ENCODE measurements at regions of chr20 and their contacts with region 1.

Region 1: DNA sequence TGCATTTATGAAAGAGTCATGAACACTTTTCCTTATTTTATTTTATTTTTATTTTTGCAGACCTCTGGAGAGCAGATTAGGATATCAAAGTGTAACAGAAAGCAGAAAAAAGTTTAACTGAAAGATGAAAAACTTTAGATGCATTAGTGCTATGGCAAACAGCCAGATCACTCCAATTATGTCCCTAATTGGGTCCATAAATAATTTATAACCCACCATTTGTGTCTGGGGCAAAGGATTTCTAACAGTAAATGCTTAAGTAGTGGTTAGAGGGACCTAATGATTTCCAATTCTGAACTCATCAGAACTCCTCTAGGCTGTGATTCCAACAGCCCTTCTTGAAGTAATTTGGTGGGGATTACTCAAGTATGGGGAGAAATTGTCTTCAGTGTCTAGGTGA is 93.7 kb upstream of the PROKR2 start:
- DNase-seq: no peak
- H3K4me3 ChIP-seq: no peak overlapping the region
- H3K27ac ChIP-seq: no peak overlapping the region
- H3K4me1 ChIP-seq: no peaks in the 10 kb centered on the region
- CTCF ChIP-seq: no peak

Region 2: DNA sequence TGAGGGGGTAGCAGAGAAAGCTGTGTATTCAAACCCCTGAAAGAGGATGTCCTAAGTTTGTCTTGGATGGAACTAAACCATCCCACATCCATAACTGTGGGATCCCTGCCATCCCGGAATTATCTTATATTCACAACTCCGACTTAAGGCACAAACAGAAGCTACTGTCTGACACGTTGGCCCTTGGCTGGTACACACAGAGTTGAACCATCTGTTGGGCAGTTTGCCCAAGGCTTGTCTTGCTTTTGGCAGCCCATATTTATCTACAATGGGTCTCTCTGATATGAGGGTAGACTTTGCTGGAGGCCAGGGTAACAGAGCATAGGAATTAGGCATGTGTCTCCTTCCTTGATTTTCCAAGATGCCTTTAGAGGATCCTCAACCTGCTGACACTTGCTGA is 22.9 kb after region 1 on chr20:
- CTCF ChIA-PET with region 1: no interaction called
- POLR2A ChIA-PET with region 1: interaction called, 3 read pairs
- intact Hi-C with region 1: loop called (anchors 1 kb)
- DNase-seq: no peak
- H3K4me3 ChIP-seq: no peak overlapping the region
- H3K27ac ChIP-seq: no peak overlapping the region
- H3K4me1 ChIP-seq: no peaks in the 10 kb centered on the region
- CTCF ChIP-seq: no peak

Measured in OCI-LY7 (cell line).